Ascending aorta (tissue), 2 donors: ENCODE measurements at regions of chr6 and their contacts with region 1.

Region 1: GRCh38 chr6:38493931-38494547 is 145.7 kb downstream of the BTBD9 start:
- DNase-seq: peak in 1 of 2 donors; percentile 87
- H3K4me3 ChIP-seq: no peak overlapping the region
- H3K27ac ChIP-seq: no peak overlapping the region
- H3K4me1 ChIP-seq: no peaks in the 10 kb centered on the region
- H3K27me3 ChIP-seq: no peaks in the 10 kb centered on the region
- CTCF ChIP-seq: peak; percentile 68 to 88 (median 84)

Region 2: DNA sequence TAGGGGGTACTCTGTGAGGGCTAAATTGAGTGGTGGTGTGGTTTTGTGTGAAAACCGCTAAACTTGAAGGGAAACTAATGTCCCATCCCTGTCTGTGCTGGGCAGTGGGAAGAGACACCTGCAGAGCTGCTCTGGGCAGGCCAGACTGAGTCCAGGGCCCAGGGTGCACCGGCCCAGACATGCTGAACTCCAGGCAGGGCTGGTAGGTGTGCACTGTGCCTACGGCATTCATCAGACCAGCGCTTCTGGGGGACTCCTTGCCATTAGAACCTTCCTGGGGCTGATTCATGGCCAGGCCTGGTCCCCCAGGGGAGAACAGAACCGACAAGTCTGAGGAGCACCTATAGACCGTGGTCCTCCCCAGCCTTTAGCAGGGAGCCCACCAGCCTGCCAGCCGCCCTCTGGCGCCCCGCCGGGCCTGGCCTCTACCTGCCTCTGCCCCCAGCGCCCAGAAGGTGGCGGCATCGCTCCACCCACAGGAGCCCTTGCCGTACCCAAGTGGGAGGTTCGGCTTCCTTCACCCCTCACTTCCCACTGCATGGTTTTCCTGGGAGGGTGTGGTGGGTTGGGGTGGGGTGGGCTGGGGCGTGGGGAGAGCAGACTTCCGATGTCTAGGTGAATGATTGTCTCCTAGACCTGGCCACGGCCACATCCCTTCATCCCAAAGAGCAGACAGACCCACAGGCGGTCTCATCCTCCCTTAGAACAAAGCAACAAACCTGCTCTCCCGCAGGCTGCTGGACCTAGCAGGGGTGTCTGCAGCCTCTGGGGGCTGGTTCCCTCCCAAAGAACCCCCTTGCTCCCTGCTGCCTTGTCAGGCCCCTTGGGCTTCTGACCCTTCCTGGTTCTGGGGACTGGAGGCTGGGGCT is 1009.9 kb before region 1 on chr6:
- intact Hi-C with region 1: loop called (anchors 10 kb)
- DNase-seq: no peak
- H3K4me3 ChIP-seq: no peak overlapping the region
- H3K27ac ChIP-seq: no peak overlapping the region
- H3K4me1 ChIP-seq: no peaks in the 10 kb centered on the region
- H3K27me3 ChIP-seq: no peaks in the 10 kb centered on the region
- CTCF ChIP-seq: peak; percentile 63 to 80 (median 67)

Region 3: DNA sequence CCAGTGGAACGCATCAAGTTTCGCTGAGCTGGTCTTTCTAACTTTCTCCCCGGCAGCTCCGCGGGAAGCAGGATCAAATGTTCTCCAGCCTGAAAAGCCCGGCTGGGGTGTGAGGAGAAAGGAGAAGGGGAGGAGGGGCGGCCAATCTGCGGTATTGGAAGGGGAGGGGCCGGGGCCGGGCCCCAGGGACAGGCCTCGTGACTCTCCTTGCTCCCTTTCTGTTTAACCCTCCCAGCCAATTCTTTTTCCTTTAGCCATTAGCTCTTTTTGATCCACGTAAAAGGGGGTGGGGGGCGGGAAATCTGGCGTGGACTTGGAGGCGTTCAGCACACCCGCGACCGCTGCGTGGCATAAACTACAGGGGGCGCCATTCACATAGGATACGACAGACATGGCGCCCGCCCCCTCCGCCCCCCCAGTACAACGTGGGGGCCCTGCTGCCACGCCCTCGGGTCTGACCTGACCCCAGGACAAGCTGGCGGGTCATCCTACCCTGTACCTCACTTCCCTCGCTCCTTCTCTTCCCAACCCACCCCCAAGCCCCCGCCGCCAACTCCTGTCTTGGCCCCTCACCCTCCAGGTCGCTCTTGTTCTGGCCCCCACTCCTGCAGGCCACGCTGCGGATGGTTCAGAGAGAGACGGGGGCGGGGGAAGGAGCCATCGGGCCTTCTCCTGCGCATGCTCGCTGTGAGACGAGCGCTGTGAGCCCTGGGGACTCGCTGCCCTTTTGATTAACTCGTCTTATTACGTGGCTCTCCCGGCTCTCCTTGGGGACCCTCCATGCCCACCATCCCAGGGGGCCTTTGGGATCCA is 788.6 kb before region 1 on chr6:
- intact Hi-C with region 1: loop called (anchors 5 kb)
- DNase-seq: peak; percentile 19 to 90
- H3K4me3 ChIP-seq: peak overlapping the region; percentile 51 to 58
- H3K27ac ChIP-seq: peak overlapping the region; percentile 68 to 83
- H3K4me1 ChIP-seq: peaks cover 0 to 3% of the 10 kb centered on the region in 2 donors
- H3K27me3 ChIP-seq: no peaks in the 10 kb centered on the region
- CTCF ChIP-seq: peak; percentile 61 to 81 (median 79)

Region 4: DNA sequence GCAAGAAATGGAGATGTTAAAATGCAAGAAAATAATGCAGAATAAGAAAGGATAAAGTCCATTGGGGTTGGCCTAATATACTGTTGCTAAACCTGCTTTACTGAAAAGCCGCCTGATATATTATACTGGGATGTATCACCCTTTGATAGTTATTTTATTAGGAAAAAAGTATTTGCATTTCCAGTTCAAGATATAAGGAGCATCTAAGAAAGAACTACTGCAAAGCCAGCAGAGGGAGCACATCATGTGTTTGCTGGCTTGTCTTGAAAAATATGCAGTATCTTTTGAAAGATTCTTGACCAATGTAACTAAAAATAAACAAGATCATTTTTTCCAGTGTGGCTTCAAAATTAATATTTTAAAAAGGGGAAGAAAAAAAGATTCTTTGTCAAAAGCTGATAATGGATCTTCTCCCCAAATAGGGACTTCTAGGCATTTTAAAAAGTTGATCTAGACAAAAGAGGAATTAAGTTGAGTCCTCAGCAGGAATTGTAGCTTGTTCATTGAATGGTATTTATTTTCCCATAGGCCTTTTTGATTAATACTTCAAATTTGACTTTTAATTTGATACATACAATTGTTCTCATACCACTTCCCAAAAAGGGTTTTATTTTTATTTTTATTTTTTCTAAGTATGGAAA is 459.6 kb before region 1 on chr6:
- intact Hi-C with region 1: loop called (anchors 10 kb)
- DNase-seq: no peak
- H3K4me3 ChIP-seq: no peak overlapping the region
- H3K27ac ChIP-seq: no peak overlapping the region
- H3K4me1 ChIP-seq: no peaks in the 10 kb centered on the region
- H3K27me3 ChIP-seq: no peaks in the 10 kb centered on the region
- CTCF ChIP-seq: peak in 1 of 3 experiments; percentile 43